ENCODE measurements at regions of chr6 and their contacts with region 1.

Region 1: DNA sequence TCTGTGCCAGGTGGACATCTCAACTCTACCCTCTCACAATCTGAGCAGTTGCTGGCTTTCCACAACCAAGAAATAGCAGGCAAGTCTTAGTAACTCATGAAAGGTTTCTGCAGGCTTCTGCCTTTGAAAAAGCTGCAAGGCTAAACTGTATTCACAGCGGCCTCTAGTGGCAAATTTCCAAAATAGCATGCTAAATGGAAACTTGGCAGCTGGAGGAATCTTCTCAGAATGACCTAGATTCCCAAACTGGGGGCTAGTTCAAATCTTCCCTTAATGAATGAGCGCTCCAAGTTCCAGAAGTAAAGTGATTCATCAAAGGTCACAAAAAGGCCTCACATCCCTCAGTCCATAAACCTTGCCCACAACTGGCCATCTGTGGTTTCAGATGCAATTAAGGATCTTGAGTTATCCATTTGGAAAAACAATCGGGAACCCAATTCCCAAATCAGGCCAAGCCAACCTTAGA is 11.9 kb upstream of the CPNE5 start:
- DNase-seq: peak; percentile 68
- ATAC-seq: no peak
- H3K4me3 Mint-ChIP-seq: no peak overlapping the region
- H3K27ac Mint-ChIP-seq: no peak overlapping the region
- H3K4me1 Mint-ChIP-seq: peaks cover 5% of the 10 kb centered on the region
- H3K27me3 Mint-ChIP-seq: no peaks in the 10 kb centered on the region

Region 2: DNA sequence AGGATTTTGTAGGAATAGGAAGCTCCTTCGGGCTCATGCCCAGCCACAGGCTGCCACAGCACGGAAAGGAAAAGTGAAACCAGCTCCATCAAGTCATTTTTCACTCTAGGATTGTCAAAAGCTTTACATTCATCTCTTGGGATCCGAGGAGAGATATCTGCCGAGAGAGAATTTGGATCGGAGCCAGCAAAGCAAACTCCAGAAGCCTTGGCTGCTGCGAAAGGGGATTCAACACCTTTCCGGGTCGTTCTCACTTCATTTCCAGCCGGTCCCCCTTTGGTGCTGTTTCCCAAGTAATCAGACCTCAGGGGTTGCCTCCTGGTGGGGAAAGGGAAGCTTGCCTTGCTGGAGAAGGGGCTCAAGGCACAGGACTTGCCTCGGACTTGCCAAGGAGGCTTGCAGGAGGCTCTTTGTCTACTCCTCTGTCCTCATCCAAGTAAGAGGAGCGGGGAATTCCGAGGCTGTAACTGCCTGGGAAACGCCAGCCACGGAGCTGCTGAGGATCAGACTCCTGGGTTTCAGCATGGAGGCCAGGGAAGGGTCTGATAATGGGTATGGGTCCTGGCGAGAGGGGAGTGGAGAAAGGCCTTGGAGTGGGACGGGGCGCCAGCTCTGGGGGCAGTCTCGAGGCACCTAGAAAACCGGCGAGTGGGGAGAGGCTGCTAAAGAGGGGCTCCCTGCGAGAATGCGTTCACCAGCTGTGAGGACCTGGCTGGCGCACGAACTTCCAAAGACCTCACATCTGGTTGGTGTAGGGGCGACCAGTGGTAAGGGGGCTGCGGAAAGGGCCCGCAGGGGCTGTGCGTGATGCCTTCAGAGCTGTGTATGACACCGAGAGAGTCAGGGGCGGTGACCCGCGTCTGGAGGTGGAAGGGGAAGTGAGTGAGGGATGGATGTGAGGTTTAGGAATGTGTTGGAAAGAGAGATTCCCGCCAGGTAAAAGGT is 464.4 kb before region 1 on chr6:
- CTCF ChIA-PET with region 1: no interaction called
- POLR2A ChIA-PET with region 1: no interaction called
- DNase-seq: peak; percentile 28
- ATAC-seq: peak; percentile 49
- H3K4me3 Mint-ChIP-seq: peak overlapping the region; percentile 79
- H3K27ac Mint-ChIP-seq: peak overlapping the region; percentile 68
- H3K4me1 Mint-ChIP-seq: peaks cover 23% of the 10 kb centered on the region
- H3K27me3 Mint-ChIP-seq: peaks cover 30% of the 10 kb centered on the region

Region 3: DNA sequence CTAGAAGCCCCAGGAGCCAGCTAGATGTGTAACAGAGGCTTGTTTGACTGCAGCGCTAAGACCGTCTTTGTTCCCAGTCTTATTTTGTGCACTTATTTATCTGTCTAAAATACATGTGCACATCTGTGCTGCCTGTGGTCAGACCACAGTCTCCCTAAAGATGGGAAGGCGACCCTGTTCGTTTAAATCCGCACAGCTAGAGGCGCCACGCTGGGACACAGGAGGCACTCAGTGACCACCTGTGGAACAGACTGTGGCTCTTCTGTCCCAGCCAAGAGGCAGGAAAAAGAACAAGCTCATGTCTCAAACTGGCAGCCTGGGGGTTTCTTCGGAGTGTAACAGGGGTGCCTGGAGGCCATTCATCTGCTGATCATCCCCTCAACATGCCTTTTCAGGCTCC is 78.8 kb before region 1 on chr6:
- CTCF ChIA-PET with region 1: interaction called, 129 read pairs
- POLR2A ChIA-PET with region 1: interaction called, 4 read pairs
- DNase-seq: no peak
- ATAC-seq: no peak
- H3K4me3 Mint-ChIP-seq: no peak overlapping the region
- H3K27ac Mint-ChIP-seq: peak overlapping the region; percentile 90
- H3K4me1 Mint-ChIP-seq: peaks cover 56% of the 10 kb centered on the region
- H3K27me3 Mint-ChIP-seq: peaks cover 8% of the 10 kb centered on the region

Region 4: DNA sequence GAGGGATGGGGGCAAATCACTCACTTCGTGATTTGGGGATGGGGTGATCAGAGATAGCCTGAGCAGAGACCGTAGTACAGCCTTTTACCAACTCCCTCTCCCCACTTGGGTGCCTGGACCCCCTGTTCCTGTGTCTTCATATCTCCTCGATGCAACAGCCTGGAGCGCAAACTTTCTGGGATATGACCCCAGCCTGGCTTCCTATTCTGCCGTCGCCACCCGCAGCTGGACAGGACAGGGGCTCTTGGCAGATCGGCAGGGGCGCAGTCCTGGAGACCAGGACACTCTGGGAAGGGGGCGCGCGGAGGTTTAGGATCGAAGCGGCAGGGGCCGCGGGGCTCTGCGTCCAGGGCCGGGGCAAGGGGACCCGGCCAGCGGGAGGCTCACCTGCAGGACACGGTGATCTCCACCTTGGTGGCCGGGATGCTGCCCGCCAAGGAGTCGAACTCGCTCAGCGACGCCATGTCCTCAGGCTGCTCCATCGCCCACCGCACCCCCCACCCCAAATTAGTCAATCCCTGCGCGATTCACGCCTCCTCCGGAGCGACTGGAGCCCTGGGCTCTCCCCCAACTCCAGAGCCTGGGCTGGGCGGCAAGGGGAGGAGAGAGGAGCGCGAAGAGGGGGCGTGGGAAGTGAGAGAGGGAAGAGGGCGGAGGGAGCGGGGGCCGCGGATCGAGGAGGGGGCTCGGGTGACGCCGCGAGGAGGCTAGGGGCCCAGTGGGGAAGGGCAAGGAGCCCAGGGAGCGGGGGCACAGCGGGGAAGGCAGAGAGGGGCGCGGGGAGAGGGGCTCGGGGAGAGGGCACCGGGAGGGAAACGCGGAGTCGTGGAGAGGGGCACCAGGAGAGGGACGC is 12.1 kb before region 1 on chr6 and contains the start of gene CPNE5:
- CTCF ChIA-PET with region 1: interaction called, 10 read pairs
- POLR2A ChIA-PET with region 1: no interaction called
- DNase-seq: no peak
- ATAC-seq: no peak
- H3K4me3 Mint-ChIP-seq: peak within 1 kb of the TSS; percentile 61
- H3K27ac Mint-ChIP-seq: no peak within 1 kb of the TSS
- H3K4me1 Mint-ChIP-seq: peaks cover 17% of the 10 kb centered on the region
- H3K27me3 Mint-ChIP-seq: peaks cover 45% of the 10 kb centered on the region
- total RNA-seq, gene CPNE5: 1.4 to 1.7 TPM

Region 5: GRCh38 chr6:36862164-36862847 is 11.1 kb after region 1 on chr6:
- CTCF ChIA-PET with region 1: interaction called, 53 read pairs
- POLR2A ChIA-PET with region 1: no interaction called
- DNase-seq: no peak
- ATAC-seq: no peak
- H3K4me3 Mint-ChIP-seq: no peak overlapping the region
- H3K27ac Mint-ChIP-seq: no peak overlapping the region
- H3K4me1 Mint-ChIP-seq: peaks cover 23% of the 10 kb centered on the region
- H3K27me3 Mint-ChIP-seq: no peaks in the 10 kb centered on the region

Region 6: GRCh38 chr6:38482466-38482865 is 1631.3 kb after region 1 on chr6:
- CTCF ChIA-PET with region 1: no interaction called
- POLR2A ChIA-PET with region 1: no interaction called
- DNase-seq: no peak
- ATAC-seq: no peak
- H3K4me3 Mint-ChIP-seq: no peak overlapping the region
- H3K27ac Mint-ChIP-seq: no peak overlapping the region
- H3K4me1 Mint-ChIP-seq: peaks cover 7% of the 10 kb centered on the region
- H3K27me3 Mint-ChIP-seq: no peaks in the 10 kb centered on the region

Measured in activated CD8-positive, alpha-beta T cell treated with anti-CD3 and anti-CD28 coated beads, Interleukin-2, amount 10 ng/mL, durations not matched to agents 7 days and 5 days (primary cell).